ENCODE measurements at regions of chr14 and their contacts with region 1.

Region 1: DNA sequence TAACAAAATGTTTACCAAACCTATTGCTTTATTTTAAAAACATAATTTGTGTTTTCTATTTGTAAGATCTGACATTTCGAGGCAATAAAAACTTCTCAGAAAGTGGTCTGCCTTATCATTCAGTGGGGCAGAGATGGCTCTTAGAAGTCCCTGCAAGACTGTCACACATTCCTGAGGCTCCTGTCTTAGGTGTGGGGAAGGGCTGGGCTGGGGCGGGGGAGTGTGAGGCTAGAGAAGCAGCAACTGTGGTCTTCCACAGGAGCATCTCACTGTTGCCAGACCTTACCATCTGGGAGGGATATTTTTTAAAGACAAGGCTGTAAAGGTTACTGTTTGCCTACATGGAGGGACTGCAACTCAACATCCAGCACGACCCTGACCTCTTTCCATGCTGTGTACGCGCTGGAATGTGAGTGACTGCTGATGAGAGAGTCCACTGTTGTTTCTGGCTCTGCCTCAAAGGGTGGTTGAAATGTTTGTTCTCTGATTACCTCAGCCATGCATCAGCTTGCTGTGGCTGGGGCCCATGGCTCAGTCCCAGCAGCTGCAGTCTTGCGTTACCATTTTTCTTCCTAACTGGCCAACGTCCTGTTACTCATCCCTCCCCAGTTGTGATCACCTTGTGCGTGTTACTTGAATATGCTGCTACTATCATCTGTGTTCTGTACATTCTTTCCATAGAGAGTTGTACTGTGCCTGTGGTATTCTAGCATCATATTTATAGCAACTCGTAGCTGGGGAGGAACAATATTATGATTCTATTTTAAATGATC is 12.4 kb downstream of the ERG28 start:
- DNase-seq: peak; percentile 94
- H3K4me3 Mint-ChIP-seq: peak overlapping the region; percentile 50
- H3K27ac Mint-ChIP-seq: peak overlapping the region; percentile 55
- H3K4me1 Mint-ChIP-seq: peaks cover 41% of the 10 kb centered on the region
- H3K27me3 Mint-ChIP-seq: no peaks in the 10 kb centered on the region
- CTCF ChIP-seq: no peak

Region 2: DNA sequence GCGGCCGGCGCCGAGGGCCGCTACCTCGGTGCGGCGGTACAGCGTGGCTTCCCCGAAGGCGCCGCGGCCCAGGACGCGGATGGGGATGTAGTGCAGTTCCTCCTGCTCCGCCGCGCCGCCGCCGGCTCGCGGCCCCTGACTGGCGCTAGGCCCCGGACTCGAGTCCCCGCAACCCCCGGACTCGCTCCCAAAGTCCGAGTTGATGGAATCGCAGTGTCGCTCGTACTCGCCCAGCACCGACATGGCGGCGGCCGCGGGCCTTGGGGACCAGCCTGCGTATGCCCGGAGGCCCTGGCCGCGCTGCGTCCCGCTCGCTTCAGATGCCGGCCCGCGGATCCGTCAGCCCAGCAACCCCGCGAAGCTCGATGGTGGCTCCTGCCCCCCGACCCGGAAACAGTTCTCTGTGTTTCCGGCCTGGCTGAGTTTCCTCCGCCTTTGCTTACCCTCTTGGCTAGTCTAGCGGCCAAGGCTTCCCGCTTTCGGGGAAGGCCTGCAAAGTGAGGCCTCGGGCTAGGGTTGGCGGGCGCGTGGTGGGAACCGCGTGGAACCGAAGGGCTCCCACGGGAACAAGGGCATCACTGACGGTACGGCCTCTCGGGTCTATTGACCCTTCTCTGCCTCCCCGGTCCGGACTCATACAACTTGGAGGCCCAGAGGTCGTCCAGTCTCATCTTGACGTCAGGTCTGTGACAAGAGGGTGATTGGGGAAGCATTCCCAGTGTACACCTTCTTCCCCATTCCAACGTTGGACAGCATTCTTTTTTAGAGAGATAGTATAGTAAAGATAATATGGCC is 521.4 kb before region 1 on chr14 and contains the start of gene NEK9:
- CTCF ChIA-PET with region 1: no interaction called
- POLR2A ChIA-PET with region 1: no interaction called
- intact Hi-C with region 1: loop called (anchors 10 kb)
- DNase-seq: peak; percentile 88
- H3K4me3 Mint-ChIP-seq: peak within 1 kb of the TSS; percentile 72
- H3K27ac Mint-ChIP-seq: peak within 1 kb of the TSS; percentile 99
- H3K4me1 Mint-ChIP-seq: peaks cover 33% of the 10 kb centered on the region
- H3K27me3 Mint-ChIP-seq: no peaks in the 10 kb centered on the region
- CTCF ChIP-seq: no peak
- total RNA-seq, gene NEK9: 112 and 113 TPM in 2 replicates

Region 3: GRCh38 chr14:75837151-75837787 is 189.0 kb after region 1 on chr14:
- CTCF ChIA-PET with region 1: no interaction called
- POLR2A ChIA-PET with region 1: no interaction called
- intact Hi-C with region 1: no loop called
- DNase-seq: peak; percentile 8
- H3K4me3 Mint-ChIP-seq: no peak overlapping the region
- H3K27ac Mint-ChIP-seq: no peak overlapping the region
- H3K4me1 Mint-ChIP-seq: peaks cover 16% of the 10 kb centered on the region
- H3K27me3 Mint-ChIP-seq: no peaks in the 10 kb centered on the region
- CTCF ChIP-seq: no peak

Measured in MCF 10A (cell line).